ENCODE measurements at regions of chr3 and their contacts with region 1.

Region 1: GRCh38 chr3:4978204-4978965 is 852 bp upstream of the BHLHE40 start:
- DNase-seq: peak; percentile 97 to 99 (median 98)
- ATAC-seq: peak; percentile 75 to 85 (median 77)
- H3K4me3 ChIP-seq: peak overlapping the region; percentile 25 to 100 (median 92)
- H3K27ac ChIP-seq: peak overlapping the region; percentile 95 to 100 (median 100)
- H3K4me1 ChIP-seq: peaks cover 0 to 49% (median 31%) of the 10 kb centered on the region in 12 donors
- H3K27me3 ChIP-seq: no peaks in the 10 kb centered on the region
- CTCF ChIP-seq: peak in 1 of 12 donors; percentile 11
- POLR2A ChIP-seq: peak in 1 of 2 donors; percentile 50

Region 2: GRCh38 chr3:4712143-4712542 is 266.2 kb before region 1 on chr3:
- intact Hi-C with region 1: loop called in 2 of 10 experiments (anchors 5 kb)
- DNase-seq: no peak
- ATAC-seq: peak in 1 of 4 donors; percentile 30
- H3K4me3 ChIP-seq: no peak overlapping the region
- H3K27ac ChIP-seq: no peak overlapping the region
- H3K4me1 ChIP-seq: peaks cover 0 to 16% (median 2%) of the 10 kb centered on the region in 12 donors
- H3K27me3 ChIP-seq: no peaks in the 10 kb centered on the region
- CTCF ChIP-seq: no peak
- POLR2A ChIP-seq: no peak

Region 3: GRCh38 chr3:4736284-4736861 is 242.0 kb before region 1 on chr3:
- intact Hi-C with region 1: loop called in 4 of 10 experiments (anchors 5 kb)
- DNase-seq: peak in 4 of 5 donors; percentile 43 to 60 (median 52)
- ATAC-seq: peak; percentile 24 to 76 (median 58)
- H3K4me3 ChIP-seq: no peak overlapping the region
- H3K27ac ChIP-seq: peak overlapping the region in 9 of 12 donors; percentile 2 to 76 (median 44)
- H3K4me1 ChIP-seq: peaks cover 0 to 61% (median 19%) of the 10 kb centered on the region in 12 donors
- H3K27me3 ChIP-seq: no peaks in the 10 kb centered on the region
- CTCF ChIP-seq: no peak
- POLR2A ChIP-seq: no peak

Region 4: GRCh38 chr3:4772171-4772804 is 206.1 kb before region 1 on chr3:
- intact Hi-C with region 1: loop called in 1 of 10 experiments (anchors 5 kb)
- DNase-seq: peak; percentile 82 to 92 (median 84)
- ATAC-seq: peak; percentile 86 to 91 (median 89)
- H3K4me3 ChIP-seq: peak overlapping the region in 1 of 12 donors; percentile 18
- H3K27ac ChIP-seq: peak overlapping the region; percentile 51 to 92 (median 81)
- H3K4me1 ChIP-seq: peaks cover 8 to 44% (median 32%) of the 10 kb centered on the region in 12 donors
- H3K27me3 ChIP-seq: no peaks in the 10 kb centered on the region
- CTCF ChIP-seq: no peak
- POLR2A ChIP-seq: no peak

Region 5: DNA sequence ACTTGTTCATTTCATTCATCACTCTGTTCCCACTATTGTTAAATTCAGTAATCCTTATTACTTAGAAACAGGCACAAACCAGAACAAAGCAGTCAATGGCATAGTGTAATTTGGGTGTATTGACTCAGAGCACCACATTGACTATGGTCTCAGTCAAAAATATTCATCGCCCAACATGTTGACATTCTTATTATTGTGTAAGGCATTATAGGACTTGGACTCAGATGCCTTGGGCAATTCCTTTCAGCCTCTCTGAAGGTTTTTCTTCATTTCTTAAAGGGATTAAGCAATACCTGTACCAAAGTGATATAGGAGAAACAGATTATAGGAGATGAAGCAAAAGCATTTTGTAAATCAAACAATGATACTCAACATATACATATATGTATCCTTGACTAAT is 113.9 kb before region 1 on chr3:
- intact Hi-C with region 1: no loop called
- DNase-seq: no peak
- ATAC-seq: no peak
- H3K4me3 ChIP-seq: no peak overlapping the region
- H3K27ac ChIP-seq: no peak overlapping the region
- H3K4me1 ChIP-seq: peaks cover 8 to 30% (median 21%) of the 10 kb centered on the region in 12 donors
- H3K27me3 ChIP-seq: no peaks in the 10 kb centered on the region
- CTCF ChIP-seq: no peak
- POLR2A ChIP-seq: no peak

Region 6: DNA sequence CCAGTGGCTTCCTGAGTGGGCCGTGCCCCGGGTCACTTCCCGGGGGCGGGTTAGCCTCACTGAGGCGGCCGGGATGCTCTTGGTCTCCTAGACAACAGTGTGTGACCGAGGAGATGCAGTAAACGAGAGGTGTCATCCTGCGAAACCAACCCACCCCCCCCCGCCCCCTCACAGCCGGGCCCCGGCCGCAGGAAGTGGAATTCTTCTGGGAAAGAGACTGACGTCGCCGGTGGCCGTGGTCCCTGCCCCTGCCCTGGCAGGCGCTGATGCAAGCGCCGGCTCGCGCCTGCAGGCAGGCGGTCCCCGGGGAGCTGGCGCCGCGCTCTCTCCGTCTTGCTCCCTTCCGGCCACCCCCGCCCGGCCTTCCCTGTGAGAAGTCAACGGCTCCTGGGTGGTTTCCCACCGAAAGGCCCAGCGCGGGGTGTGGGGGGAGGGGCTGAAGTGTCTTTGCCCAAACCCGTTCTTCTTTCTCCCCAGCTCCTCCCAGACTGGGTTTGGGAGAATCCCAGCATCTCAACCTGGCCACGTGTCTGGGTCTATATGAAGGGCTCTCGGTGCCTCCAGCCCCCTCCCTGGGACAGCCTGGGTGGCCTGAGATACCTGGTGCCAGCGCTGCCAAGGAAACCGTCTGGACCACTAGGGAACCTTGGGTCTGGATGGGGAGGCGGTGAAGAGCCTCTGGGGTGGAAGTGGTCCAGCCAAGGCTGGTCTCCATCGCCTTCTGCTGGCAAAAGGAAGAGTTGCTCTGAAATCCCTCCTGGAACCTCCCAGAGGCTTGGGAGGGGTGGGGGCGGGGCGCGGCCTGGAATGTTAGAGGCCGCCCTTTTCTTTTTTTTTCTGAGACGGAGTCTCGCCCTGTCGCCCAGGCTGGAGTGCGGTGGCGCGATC is 48.2 kb after region 1 on chr3:
- intact Hi-C with region 1: loop called in 5 of 10 experiments (anchors 1 to 2 kb)
- DNase-seq: peak; percentile 92 to 96 (median 93)
- ATAC-seq: peak; percentile 90 to 96 (median 92)
- H3K4me3 ChIP-seq: peak overlapping the region; percentile 13 to 65 (median 56)
- H3K27ac ChIP-seq: peak overlapping the region; percentile 58 to 95 (median 81)
- H3K4me1 ChIP-seq: peaks cover 0 to 23% (median 8%) of the 10 kb centered on the region in 12 donors
- H3K27me3 ChIP-seq: no peaks in the 10 kb centered on the region
- CTCF ChIP-seq: peak; percentile 54 to 87 (median 66)
- POLR2A ChIP-seq: no peak